Activated CD4-positive, alpha-beta T cell treated with anti-CD3 and anti-CD28 coated beads for 36 hours (primary cell): ENCODE measurements at regions of chr19 and their contacts with region 1.

Region 1: GRCh38 chr19:4328243-4328990 is 10.2 kb downstream of the STAP2 start:
- DNase-seq: peak; percentile 100
- ATAC-seq: peak; percentile 85
- H3K4me3 Mint-ChIP-seq: peak overlapping the region; percentile 93
- H3K27ac Mint-ChIP-seq: peak overlapping the region; percentile 94
- H3K4me1 Mint-ChIP-seq: peaks cover 27% of the 10 kb centered on the region
- H3K27me3 Mint-ChIP-seq: no peaks in the 10 kb centered on the region

Region 2: GRCh38 chr19:3275583-3276340 is 1052.7 kb before region 1 on chr19:
- CTCF ChIA-PET with region 1: no interaction called
- POLR2A ChIA-PET with region 1: no interaction called
- intact Hi-C with region 1: loop called in 1 of 2 experiments (anchors 1 kb)
- DNase-seq: peak; percentile 99
- ATAC-seq: peak; percentile 83
- H3K4me3 Mint-ChIP-seq: peak overlapping the region; percentile 73
- H3K27ac Mint-ChIP-seq: peak overlapping the region; percentile 80
- H3K4me1 Mint-ChIP-seq: peaks cover 8% of the 10 kb centered on the region
- H3K27me3 Mint-ChIP-seq: peaks cover 9% of the 10 kb centered on the region

Region 3: GRCh38 chr19:3762501-3763459 is 565.6 kb before region 1 on chr19 and contains the start of gene MRPL54:
- CTCF ChIA-PET with region 1: no interaction called
- POLR2A ChIA-PET with region 1: no interaction called
- intact Hi-C with region 1: loop called in 1 of 2 experiments (anchors 5 kb)
- DNase-seq: peak; percentile 100
- ATAC-seq: peak; percentile 88
- H3K4me3 Mint-ChIP-seq: peak within 1 kb of the TSS; percentile 100
- H3K27ac Mint-ChIP-seq: peak within 1 kb of the TSS; percentile 99
- H3K4me1 Mint-ChIP-seq: peaks cover 39% of the 10 kb centered on the region
- H3K27me3 Mint-ChIP-seq: no peaks in the 10 kb centered on the region
- total RNA-seq, gene MRPL54: 54.8 to 63.9 TPM

Region 4: GRCh38 chr19:4007021-4007835 is 321.2 kb before region 1 on chr19 and contains the start of gene PIAS4:
- CTCF ChIA-PET with region 1: no interaction called
- POLR2A ChIA-PET with region 1: no interaction called
- intact Hi-C with region 1: loop called in 1 of 2 experiments (anchors 1 kb)
- DNase-seq: peak; percentile 97
- ATAC-seq: peak; percentile 92
- H3K4me3 Mint-ChIP-seq: peak within 1 kb of the TSS; percentile 75
- H3K27ac Mint-ChIP-seq: peak within 1 kb of the TSS; percentile 71
- H3K4me1 Mint-ChIP-seq: peaks cover 27% of the 10 kb centered on the region
- H3K27me3 Mint-ChIP-seq: no peaks in the 10 kb centered on the region
- total RNA-seq, gene PIAS4: 23.0 to 37.3 TPM

Region 5: GRCh38 chr19:4246767-4247593 is 81.4 kb before region 1 on chr19 and contains the start of gene YJU2:
- CTCF ChIA-PET with region 1: interaction called, 3 read pairs
- POLR2A ChIA-PET with region 1: no interaction called
- intact Hi-C with region 1: loop called in 1 of 2 experiments (anchors 1 kb)
- DNase-seq: peak; percentile 100
- ATAC-seq: peak; percentile 97
- H3K4me3 Mint-ChIP-seq: peak within 1 kb of the TSS; percentile 84
- H3K27ac Mint-ChIP-seq: peak within 1 kb of the TSS; percentile 100
- H3K4me1 Mint-ChIP-seq: peaks cover 9% of the 10 kb centered on the region
- H3K27me3 Mint-ChIP-seq: no peaks in the 10 kb centered on the region
- total RNA-seq, gene YJU2: 29.8 to 34.8 TPM

Region 6: GRCh38 chr19:4342615-4343369 is 14.4 kb after region 1 on chr19:
- CTCF ChIA-PET with region 1: interaction called, 5 read pairs
- POLR2A ChIA-PET with region 1: interaction called, 12 read pairs
- intact Hi-C with region 1: loop called (anchors 1 kb)
- DNase-seq: peak; percentile 97
- ATAC-seq: peak; percentile 91
- H3K4me3 Mint-ChIP-seq: peak overlapping the region; percentile 89
- H3K27ac Mint-ChIP-seq: peak overlapping the region; percentile 93
- H3K4me1 Mint-ChIP-seq: peaks cover 17% of the 10 kb centered on the region
- H3K27me3 Mint-ChIP-seq: no peaks in the 10 kb centered on the region

Region 7: GRCh38 chr19:4471403-4472173 is 143.2 kb after region 1 on chr19:
- CTCF ChIA-PET with region 1: no interaction called
- POLR2A ChIA-PET with region 1: no interaction called
- intact Hi-C with region 1: loop called in 1 of 2 experiments (anchors 1 kb)
- DNase-seq: peak; percentile 98
- ATAC-seq: peak; percentile 90
- H3K4me3 Mint-ChIP-seq: no peak overlapping the region
- H3K27ac Mint-ChIP-seq: no peak overlapping the region
- H3K4me1 Mint-ChIP-seq: peaks cover 21% of the 10 kb centered on the region
- H3K27me3 Mint-ChIP-seq: no peaks in the 10 kb centered on the region